Activated CD4-positive, alpha-beta T cell treated with anti-CD3 and anti-CD28 coated beads, Interleukin-2, amount 10 ng/mL, durations not matched to agents 24 days and 14 days (primary cell): ENCODE measurements at regions of chr3 and their contacts with region 1.

Region 1: DNA sequence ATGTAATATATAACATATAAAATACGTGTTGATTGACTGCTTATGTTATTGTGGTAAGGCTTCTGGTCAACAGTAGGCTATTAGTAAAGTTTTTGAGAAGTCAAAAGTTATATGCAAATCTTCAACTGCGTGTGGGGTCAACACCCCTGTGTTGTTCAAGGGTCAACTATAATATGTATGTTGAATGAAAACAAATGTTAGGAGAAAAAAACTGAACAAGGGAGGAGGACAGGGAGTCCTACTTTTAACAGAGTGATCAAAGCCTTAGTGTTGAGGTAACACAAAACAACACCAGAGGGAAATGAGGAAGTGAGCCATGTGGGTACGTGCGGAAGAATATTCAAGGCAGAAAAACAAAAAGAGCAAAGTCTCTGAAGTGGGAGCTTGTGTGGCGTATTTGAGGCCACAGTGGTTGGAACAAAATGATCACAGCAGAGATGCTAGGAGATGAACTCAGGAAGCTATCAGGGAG is 62.5 kb downstream of the SFMBT1 start:
- DNase-seq: peak; percentile 92
- H3K4me3 Mint-ChIP-seq: peak overlapping the region; percentile 68
- H3K27ac Mint-ChIP-seq: peak overlapping the region; percentile 84
- H3K4me1 Mint-ChIP-seq: peaks cover 29% of the 10 kb centered on the region
- H3K27me3 Mint-ChIP-seq: no peaks in the 10 kb centered on the region

Region 2: DNA sequence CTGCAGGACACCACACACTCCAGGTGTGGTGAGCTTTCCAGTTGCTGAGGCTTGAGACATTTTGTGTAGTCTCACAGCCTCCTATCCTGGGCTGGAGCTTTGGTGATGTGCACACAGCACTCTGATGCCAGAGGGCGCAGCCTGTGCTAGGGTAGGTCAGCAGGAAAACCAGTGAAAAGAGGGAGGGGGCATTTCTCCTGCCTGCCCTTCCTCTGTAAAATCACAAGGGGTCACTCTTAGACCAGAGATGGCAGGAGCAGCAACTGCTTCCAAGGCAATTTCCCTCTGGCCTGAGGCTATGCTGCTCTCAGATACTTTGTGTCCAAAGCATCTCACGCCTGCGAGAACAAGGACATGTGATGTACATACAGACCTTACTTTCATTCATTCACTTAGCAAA is 132.0 kb before region 1 on chr3:
- intact Hi-C with region 1: no loop called
- DNase-seq: peak; percentile 76
- H3K4me3 Mint-ChIP-seq: no peak overlapping the region
- H3K27ac Mint-ChIP-seq: no peak overlapping the region
- H3K4me1 Mint-ChIP-seq: no peaks in the 10 kb centered on the region
- H3K27me3 Mint-ChIP-seq: no peaks in the 10 kb centered on the region

Region 3: GRCh38 chr3:53023068-53023823 is 39.9 kb after region 1 on chr3:
- intact Hi-C with region 1: loop called (anchors 1 kb)
- DNase-seq: no peak
- H3K4me3 Mint-ChIP-seq: no peak overlapping the region
- H3K27ac Mint-ChIP-seq: no peak overlapping the region
- H3K4me1 Mint-ChIP-seq: peaks cover 30% of the 10 kb centered on the region
- H3K27me3 Mint-ChIP-seq: no peaks in the 10 kb centered on the region

Region 4: GRCh38 chr3:53065841-53066480 is 82.6 kb after region 1 on chr3:
- intact Hi-C with region 1: no loop called
- DNase-seq: no peak
- H3K4me3 Mint-ChIP-seq: no peak overlapping the region
- H3K27ac Mint-ChIP-seq: no peak overlapping the region
- H3K4me1 Mint-ChIP-seq: peaks cover 2% of the 10 kb centered on the region
- H3K27me3 Mint-ChIP-seq: peaks cover 27% of the 10 kb centered on the region